ENCODE measurements at regions of chr5 and their contacts with region 1.

Region 1: DNA sequence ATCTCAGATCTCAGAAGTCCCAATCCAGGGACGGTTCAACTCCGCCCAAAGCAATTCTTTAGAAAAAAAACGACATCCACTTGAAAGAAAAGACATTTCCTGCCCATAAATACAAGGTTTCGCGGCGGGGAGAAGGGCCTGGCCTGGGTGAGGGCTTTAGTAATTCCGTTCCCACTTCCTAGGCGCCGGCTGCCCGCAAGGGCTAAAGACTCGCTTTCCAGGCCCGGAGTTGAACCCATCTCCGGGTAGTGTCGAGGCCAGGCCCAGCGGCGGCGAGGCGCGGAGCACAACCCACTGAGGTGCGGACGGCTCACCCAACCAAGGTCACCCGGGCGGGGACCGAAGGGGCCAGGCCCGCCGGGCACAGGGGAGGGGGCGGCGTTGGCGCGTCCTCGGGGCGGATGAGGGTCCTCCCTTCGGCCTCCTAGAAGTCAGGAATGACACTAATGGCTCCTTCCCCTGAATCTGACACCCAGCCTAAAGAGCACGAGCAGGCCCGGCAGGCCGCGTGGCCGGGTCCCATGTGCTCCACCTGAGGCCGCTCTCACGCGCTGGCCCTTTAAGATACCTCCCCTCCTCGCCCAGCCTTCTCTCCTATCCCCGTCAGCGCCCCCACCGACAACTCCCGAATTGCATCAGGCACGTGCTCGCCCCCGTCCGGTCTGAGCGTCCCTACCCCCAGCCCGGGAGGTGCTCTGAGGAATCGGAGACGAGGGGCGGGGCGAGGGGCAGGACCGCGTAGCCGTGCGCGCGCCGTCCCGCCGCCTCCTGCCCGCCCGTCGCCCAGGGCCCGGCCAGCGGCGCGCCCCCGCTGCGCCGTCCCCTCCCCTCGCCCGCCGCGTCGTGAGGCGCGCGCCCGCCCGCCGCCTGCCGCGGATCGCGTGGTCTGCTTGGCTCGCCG is 467 bp upstream of the LARP1 start:
- DNase-seq: peak; percentile 97
- ATAC-seq: peak; percentile 88
- H3K4me3 Mint-ChIP-seq: peak overlapping the region; percentile 82
- H3K27ac Mint-ChIP-seq: peak overlapping the region; percentile 93
- H3K4me1 Mint-ChIP-seq: peaks cover 44% of the 10 kb centered on the region
- H3K27me3 Mint-ChIP-seq: no peaks in the 10 kb centered on the region
- CTCF ChIP-seq: no peak

Region 2: GRCh38 chr5:154445422-154446182 is 309.1 kb before region 1 on chr5 and contains the start of gene SAP30L:
- CTCF ChIA-PET with region 1: no interaction called
- POLR2A ChIA-PET with region 1: no interaction called
- intact Hi-C with region 1: loop called (anchors 1 kb)
- DNase-seq: peak; percentile 97
- ATAC-seq: peak; percentile 96
- H3K4me3 Mint-ChIP-seq: peak within 1 kb of the TSS; percentile 99
- H3K27ac Mint-ChIP-seq: peak within 1 kb of the TSS; percentile 90
- H3K4me1 Mint-ChIP-seq: peaks cover 47% of the 10 kb centered on the region
- H3K27me3 Mint-ChIP-seq: no peaks in the 10 kb centered on the region
- CTCF ChIP-seq: no peak
- total RNA-seq, gene SAP30L: 26.4 and 28.9 TPM in 2 replicates

Region 3: DNA sequence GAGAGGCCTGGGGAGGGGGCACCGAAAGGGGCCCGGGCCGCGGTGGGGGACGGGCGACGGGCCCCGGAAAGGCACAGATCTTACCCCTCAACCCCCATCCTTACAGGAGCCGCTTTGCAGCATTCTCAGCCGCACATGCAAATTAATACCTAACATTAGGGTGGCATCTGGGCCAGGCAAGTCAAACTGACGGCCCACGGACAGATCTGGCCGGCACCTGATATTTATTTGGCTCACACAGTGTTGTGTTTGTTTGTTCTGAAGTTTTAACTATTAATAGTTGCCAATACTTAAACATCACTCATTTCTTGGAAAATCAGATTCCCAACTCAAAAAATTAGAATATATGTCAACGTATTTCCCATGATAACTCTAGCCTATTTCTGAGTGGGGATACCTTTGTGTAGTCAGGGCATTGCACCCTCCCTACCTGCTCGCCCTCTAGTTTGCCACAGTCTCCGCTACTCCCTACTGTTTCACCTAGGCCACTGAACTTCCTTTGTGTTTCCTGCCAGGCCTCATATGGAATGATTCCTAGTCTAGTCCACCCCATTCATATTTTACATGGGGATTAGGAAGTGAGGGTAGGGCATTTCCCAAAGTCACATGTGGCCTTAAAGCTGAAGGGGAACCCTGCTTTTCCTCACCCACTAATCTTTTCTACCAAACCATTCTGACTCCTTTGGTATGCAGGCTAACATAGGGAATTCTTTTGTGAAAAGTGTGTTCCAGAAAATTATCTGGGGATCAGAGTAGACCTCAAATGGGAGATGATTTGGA is 71.4 kb before region 1 on chr5:
- CTCF ChIA-PET with region 1: no interaction called
- POLR2A ChIA-PET with region 1: no interaction called
- intact Hi-C with region 1: loop called (anchors 1 kb)
- DNase-seq: no peak
- ATAC-seq: peak; percentile 32
- H3K4me3 Mint-ChIP-seq: peak overlapping the region; percentile 80
- H3K27ac Mint-ChIP-seq: no peak overlapping the region
- H3K4me1 Mint-ChIP-seq: peaks cover 6% of the 10 kb centered on the region
- H3K27me3 Mint-ChIP-seq: peaks cover 4% of the 10 kb centered on the region
- CTCF ChIP-seq: no peak

Region 4: GRCh38 chr5:154791535-154791934 is 36.8 kb after region 1 on chr5:
- CTCF ChIA-PET with region 1: no interaction called
- POLR2A ChIA-PET with region 1: no interaction called
- intact Hi-C with region 1: loop called (anchors 5 kb)
- DNase-seq: no peak
- ATAC-seq: peak; percentile 62
- H3K4me3 Mint-ChIP-seq: no peak overlapping the region
- H3K27ac Mint-ChIP-seq: peak overlapping the region; percentile 71
- H3K4me1 Mint-ChIP-seq: peaks cover 47% of the 10 kb centered on the region
- H3K27me3 Mint-ChIP-seq: no peaks in the 10 kb centered on the region
- CTCF ChIP-seq: no peak

Region 5: DNA sequence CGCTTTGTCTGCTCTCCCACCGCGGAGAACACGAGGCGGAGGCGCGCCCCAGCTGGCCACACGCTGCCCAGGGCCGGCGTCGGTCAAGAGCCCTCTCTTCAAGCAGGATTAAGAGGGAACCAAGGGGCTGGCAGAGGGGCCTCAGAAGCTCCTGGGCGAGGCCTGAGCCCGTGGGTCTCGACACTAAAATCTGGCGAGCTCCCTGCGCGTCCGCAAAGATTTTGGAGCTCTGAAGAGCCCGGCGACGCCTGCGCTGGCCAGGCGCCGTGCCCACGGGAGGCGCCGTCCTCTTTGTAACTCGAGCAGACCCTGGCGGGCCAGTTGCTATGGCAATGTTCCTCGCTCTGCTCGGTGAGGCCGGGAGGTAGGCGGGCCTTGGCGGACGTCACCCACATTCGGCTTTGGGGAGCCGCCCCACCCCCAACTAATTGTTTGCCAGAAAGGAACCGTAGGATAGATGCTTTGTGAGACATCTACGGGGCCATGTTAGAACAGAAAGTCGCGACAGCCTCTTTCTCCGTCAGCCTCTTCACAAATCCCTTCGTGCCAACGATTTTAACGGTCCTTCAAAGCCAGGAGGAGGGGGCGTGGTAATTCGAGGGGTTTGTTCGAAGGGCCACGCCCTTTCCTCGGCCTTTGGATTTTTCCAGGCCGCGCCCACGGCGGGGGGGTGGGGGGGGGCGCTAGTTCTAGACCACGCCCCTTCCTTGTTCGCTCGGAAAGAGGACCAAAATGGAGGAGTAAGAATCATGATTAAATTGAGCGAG is 103.0 kb after region 1 on chr5:
- CTCF ChIA-PET with region 1: no interaction called
- POLR2A ChIA-PET with region 1: interaction called, 10 read pairs
- intact Hi-C with region 1: loop called (anchors 1 kb)
- DNase-seq: peak; percentile 75
- ATAC-seq: peak; percentile 49
- H3K4me3 Mint-ChIP-seq: peak overlapping the region; percentile 91
- H3K27ac Mint-ChIP-seq: peak overlapping the region; percentile 97
- H3K4me1 Mint-ChIP-seq: peaks cover 42% of the 10 kb centered on the region
- H3K27me3 Mint-ChIP-seq: no peaks in the 10 kb centered on the region
- CTCF ChIP-seq: no peak